ENCODE measurements at regions of chr16 and their contacts with region 1.

Region 1: GRCh38 chr16:84504420-84505248 is at the start of gene MEAK7:
- DNase-seq: peak; percentile 98
- H3K4me3 ChIP-seq: peak within 1 kb of the TSS; percentile 83
- H3K27ac ChIP-seq: peak within 1 kb of the TSS; percentile 92
- H3K4me1 ChIP-seq: peaks cover 48% of the 10 kb centered on the region
- CTCF ChIP-seq: peak; percentile 19; the same call in 1 of the 2 replicates
- total RNA-seq, gene MEAK7: 9.6 and 12.0 TPM in 2 replicates

Region 2: DNA sequence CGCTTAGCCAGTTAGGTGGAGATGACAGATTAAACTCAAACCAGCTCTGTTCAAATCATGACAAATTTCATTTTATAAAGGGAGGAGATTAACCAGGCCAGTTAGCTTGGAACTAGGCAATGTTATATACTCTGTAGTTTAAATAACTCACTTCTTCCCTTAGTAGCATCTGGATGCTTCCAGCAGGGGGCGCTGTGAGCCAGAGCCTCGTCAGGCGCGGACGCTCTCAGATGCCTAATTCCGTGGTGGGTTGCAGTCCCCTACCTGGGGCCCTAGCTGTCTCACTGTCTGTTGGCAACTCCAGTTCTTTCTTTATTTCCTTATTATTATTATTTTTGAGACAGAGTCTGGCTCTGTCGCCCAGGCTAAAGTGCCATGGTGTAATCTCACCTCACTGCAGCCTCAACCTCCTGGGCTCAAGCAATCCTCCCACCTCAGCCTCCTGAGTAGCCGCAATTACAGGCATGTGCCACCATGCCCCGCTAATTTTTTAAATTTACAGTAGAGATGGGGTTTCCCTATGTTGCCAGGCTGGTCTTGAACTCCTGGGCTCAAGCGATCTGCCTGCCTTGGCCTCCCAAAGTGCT is 227.3 kb before region 1 on chr16:
- CTCF ChIA-PET with region 1: interaction called, 4 read pairs
- POLR2A ChIA-PET with region 1: no interaction called
- intact Hi-C with region 1: loop called (anchors 1 kb)
- DNase-seq: peak; percentile 67
- H3K4me3 ChIP-seq: no peak overlapping the region
- H3K27ac ChIP-seq: no peak overlapping the region
- H3K4me1 ChIP-seq: no peaks in the 10 kb centered on the region
- CTCF ChIP-seq: peak; percentile 93

Region 3: GRCh38 chr16:84593825-84594724 is 89.4 kb after region 1 on chr16:
- CTCF ChIA-PET with region 1: interaction called, 3 read pairs
- POLR2A ChIA-PET with region 1: interaction called, 26 read pairs
- intact Hi-C with region 1: loop called (anchors 1 kb)
- DNase-seq: peak; percentile 97
- H3K4me3 ChIP-seq: peak overlapping the region; percentile 71
- H3K27ac ChIP-seq: peak overlapping the region; percentile 97
- H3K4me1 ChIP-seq: peaks cover 69% of the 10 kb centered on the region
- CTCF ChIP-seq: no peak

Region 4: GRCh38 chr16:84599521-84600202 is 95.0 kb after region 1 on chr16:
- CTCF ChIA-PET with region 1: interaction called, 3 read pairs
- POLR2A ChIA-PET with region 1: interaction called, 26 read pairs
- intact Hi-C with region 1: loop called (anchors 1 kb)
- DNase-seq: peak; percentile 71
- H3K4me3 ChIP-seq: peak overlapping the region; percentile 60
- H3K27ac ChIP-seq: peak overlapping the region; percentile 97
- H3K4me1 ChIP-seq: peaks cover 93% of the 10 kb centered on the region
- CTCF ChIP-seq: no peak

Measured in OCI-LY7 (cell line).